Esophagus muscularis mucosa (tissue), 4 donors: ENCODE measurements at regions of chr1 and their contacts with region 1.

Region 1: DNA sequence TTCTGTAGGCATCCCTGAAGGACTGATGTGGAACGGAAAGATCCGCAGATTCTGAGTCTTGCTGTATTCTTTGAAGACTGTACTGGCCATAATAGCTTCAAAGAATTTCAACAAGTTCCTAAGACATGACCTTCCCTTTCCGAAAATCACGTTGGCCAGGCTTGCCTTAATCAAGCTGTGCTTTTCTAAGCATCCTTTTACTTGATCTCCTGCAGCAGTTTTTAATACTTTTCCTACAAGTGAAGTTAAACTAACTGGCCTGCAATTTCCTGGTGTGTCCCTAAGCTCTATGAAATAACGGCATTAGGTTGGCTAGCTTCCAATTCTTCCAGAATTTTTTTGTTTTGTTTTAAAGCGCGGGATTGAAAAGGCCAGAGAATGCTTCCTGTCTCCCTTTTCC is 40.3 kb downstream of the SPAG17 start:
- DNase-seq: no peak
- H3K4me3 ChIP-seq: no peak overlapping the region
- H3K27ac ChIP-seq: no peak overlapping the region
- H3K4me1 ChIP-seq: no peaks in the 10 kb centered on the region
- H3K27me3 ChIP-seq: no peaks in the 10 kb centered on the region
- CTCF ChIP-seq: no peak
- EP300 ChIP-seq: no peak
- POLR2A ChIP-seq: no peak

Region 2: GRCh38 chr1:118077331-118078055 is 67.2 kb before region 1 on chr1:
- intact Hi-C with region 1: no loop called
- DNase-seq: no peak
- H3K4me3 ChIP-seq: no peak overlapping the region
- H3K27ac ChIP-seq: no peak overlapping the region
- H3K4me1 ChIP-seq: no peaks in the 10 kb centered on the region
- H3K27me3 ChIP-seq: no peaks in the 10 kb centered on the region
- CTCF ChIP-seq: peak in 2 of 3 experiments; percentile 9 to 24
- EP300 ChIP-seq: no peak
- POLR2A ChIP-seq: no peak

Region 3: DNA sequence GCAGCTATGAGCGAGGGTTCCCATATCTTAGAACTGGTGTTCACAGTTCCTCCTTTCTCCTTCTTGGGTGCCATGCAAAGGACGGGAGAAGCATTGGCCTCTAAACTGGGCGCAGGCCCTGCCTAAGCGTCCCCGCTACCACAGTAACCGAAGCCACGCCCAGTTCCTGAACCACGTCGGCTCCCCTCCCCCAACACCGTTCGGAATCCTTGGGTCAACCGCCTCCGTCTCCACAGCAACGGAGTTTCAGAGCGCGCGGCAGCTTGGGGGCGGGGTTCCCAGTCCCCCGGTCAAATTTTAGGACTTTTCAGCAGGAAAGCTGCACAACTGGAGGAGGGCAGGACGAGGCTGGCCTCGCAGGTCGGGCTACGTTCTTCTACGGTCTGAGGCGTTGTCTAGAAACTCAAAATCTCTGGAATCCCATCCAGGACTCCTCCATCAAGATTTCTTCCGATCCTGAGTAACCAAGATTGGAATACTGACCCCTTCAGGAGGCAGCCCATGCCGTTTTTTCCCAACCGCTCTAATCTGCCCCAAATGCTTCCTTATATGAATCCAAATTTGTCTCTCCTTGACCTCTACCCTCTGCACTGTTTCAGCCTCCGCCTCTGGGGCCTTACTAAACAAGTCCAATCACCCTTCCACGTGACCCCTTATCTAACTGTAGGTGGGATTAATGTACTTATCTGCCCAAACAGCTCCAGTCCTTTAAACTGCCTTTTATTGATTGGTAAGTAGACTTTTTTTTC is 40.6 kb after region 1 on chr1 and contains the start of gene SPAG17:
- intact Hi-C with region 1: no loop called
- DNase-seq: no peak
- H3K4me3 ChIP-seq: peak within 1 kb of the TSS; percentile 42 to 54 (median 50)
- H3K27ac ChIP-seq: no peak within 1 kb of the TSS
- H3K4me1 ChIP-seq: peaks cover 0 to 12% (median 10%) of the 10 kb centered on the region in 4 donors
- H3K27me3 ChIP-seq: no peaks in the 10 kb centered on the region
- CTCF ChIP-seq: no peak
- EP300 ChIP-seq: no peak
- POLR2A ChIP-seq: no peak
- total RNA-seq, gene SPAG17: 0.17 to 0.23 TPM in 2 of 4 donors, not detected in the others

Region 4: DNA sequence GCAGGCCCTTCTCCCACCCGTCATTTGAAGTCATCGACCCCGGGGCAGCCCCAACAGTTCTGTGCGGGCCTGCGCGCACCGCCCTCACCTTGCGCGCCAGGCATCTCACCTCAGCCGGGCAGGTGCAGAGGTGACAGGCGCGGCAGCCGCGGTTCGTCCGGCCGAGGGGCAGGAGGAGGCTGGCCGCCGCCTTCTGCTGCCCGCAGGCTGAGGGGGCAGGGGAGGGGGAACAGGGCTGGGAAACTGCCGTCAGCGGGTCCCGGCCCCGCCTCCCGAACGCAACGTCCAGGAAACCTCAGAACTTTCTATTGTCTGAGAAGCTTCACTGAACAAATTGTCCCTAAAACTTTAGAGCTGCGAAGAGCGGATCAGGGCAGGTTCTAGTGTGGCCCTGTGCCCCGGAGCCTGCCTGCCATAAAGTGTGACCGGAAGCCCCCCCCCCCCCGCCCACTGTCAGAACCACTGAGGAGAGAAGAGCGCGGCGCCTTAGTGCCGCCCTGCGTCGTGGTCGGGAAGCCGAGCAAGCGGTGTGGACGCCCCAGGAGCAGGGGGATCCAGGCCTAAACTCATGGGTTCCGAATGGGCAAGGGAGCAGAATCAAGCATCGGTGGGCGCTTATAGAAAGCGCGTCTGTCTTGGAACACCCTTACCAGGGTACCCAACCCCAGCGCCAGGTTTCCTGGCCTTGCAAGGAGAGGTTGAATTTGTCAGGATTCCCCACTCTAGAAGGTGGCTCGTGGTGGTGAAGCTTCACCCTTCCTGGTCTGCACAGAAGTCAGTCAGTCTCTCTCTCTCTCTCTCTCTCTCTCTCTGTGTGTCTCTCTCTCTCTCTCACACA is 856.7 kb after region 1 on chr1:
- intact Hi-C with region 1: loop called (anchors 5 kb)
- DNase-seq: no peak
- H3K4me3 ChIP-seq: peak overlapping the region; percentile 28 to 47 (median 30)
- H3K27ac ChIP-seq: no peak overlapping the region
- H3K4me1 ChIP-seq: peaks cover 16 to 36% (median 27%) of the 10 kb centered on the region in 4 donors
- H3K27me3 ChIP-seq: peaks cover 0 to 100% (median 69%) of the 10 kb centered on the region in 4 donors
- CTCF ChIP-seq: no peak
- EP300 ChIP-seq: no peak
- POLR2A ChIP-seq: no peak